ENCODE measurements at regions of chr17 and their contacts with region 1.

Region 1: DNA sequence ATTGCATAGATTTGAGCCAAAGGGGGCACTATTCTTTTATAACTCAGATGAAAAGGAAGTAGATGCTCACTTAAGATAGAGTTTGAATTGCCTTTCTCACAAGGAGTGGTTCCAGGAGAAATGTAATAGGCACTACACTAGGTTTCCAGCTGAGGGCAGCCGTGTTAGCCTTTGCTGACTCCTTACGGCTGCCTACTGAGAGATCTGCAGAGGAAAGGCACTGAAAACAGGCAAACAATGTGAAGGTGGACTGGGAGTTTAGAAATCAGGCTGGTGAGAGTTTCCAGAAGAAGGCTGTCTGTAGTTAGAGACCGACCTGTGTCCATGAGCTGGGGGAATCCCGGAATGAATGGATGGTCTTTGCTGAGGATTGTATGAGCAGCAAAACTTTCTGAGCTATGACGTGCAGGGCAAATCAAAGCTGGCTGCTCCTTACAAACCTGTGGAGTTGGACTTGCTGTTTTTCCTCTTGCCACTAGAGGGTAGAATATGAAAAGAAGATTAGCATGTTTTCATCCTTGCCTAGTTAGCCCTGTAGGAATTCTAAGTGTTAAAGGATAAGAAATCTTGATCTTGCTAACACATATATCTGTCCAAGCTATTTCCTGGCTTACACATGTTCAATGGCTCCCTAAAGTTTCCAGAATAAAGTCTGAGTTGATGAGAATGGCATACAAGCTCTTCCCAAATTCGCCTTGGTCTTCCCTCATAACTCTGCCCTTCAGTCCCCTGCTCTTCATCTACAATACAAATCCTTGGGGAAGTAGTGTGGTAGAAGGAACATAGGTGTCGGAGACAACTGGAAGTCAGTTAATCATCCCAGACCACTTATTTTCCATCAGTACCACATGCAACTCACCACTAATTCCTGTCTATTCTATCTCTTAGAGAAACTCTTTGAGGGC is 20.1 kb upstream of the TAOK1 start:
- H3K4me3 ChIP-seq: peak overlapping the region; percentile 21
- H3K27ac ChIP-seq: 0 out of 2 replicates have a peak overlapping the region, but pooled peaks have one; percentile 4
- H3K4me1 ChIP-seq: no peaks in the 10 kb centered on the region
- CTCF ChIP-seq: peak; percentile 75; the same call in 1 of the 2 replicates

Region 2: GRCh38 chr17:29341751-29342150 is 28.3 kb before region 1 on chr17:
- CTCF ChIA-PET with region 1: interaction called, 20 read pairs
- POLR2A ChIA-PET with region 1: no interaction called
- H3K4me3 ChIP-seq: no peak overlapping the region
- H3K27ac ChIP-seq: no peak overlapping the region
- H3K4me1 ChIP-seq: no peaks in the 10 kb centered on the region
- CTCF ChIP-seq: no peak

Region 3: GRCh38 chr17:29389982-29390850 is 20.1 kb after region 1 on chr17 and contains the start of gene TAOK1:
- CTCF ChIA-PET with region 1: interaction called, 17 read pairs
- POLR2A ChIA-PET with region 1: interaction called, 9 read pairs
- H3K4me3 ChIP-seq: peak within 1 kb of the TSS; percentile 60
- H3K27ac ChIP-seq: peak within 1 kb of the TSS; percentile 99
- H3K4me1 ChIP-seq: peaks cover 12% of the 10 kb centered on the region; the same call in 1 of the 2 replicates
- CTCF ChIP-seq: no peak; the same call in 1 of the 2 replicates

Region 4: GRCh38 chr17:29434550-29434949 is 64.5 kb after region 1 on chr17:
- CTCF ChIA-PET with region 1: no interaction called
- POLR2A ChIA-PET with region 1: no interaction called
- H3K4me3 ChIP-seq: no peak overlapping the region
- H3K27ac ChIP-seq: no peak overlapping the region
- H3K4me1 ChIP-seq: no peaks in the 10 kb centered on the region
- CTCF ChIP-seq: no peak

Region 5: GRCh38 chr17:29533976-29534375 is 163.9 kb after region 1 on chr17:
- CTCF ChIA-PET with region 1: interaction called, 70 read pairs
- POLR2A ChIA-PET with region 1: no interaction called
- H3K4me3 ChIP-seq: no peak overlapping the region
- H3K27ac ChIP-seq: no peak overlapping the region
- H3K4me1 ChIP-seq: no peaks in the 10 kb centered on the region
- CTCF ChIP-seq: no peak

Region 6: GRCh38 chr17:29568331-29569244 is 198.5 kb after region 1 on chr17 and contains the start of gene TP53I13:
- CTCF ChIA-PET with region 1: interaction called, 29 read pairs
- POLR2A ChIA-PET with region 1: interaction called, 5 read pairs
- H3K4me3 ChIP-seq: peak within 1 kb of the TSS; percentile 78
- H3K27ac ChIP-seq: peak within 1 kb of the TSS; percentile 96
- H3K4me1 ChIP-seq: peaks cover 13% of the 10 kb centered on the region
- CTCF ChIP-seq: peak; percentile 75